ENCODE measurements at regions of chr17 and their contacts with region 1.

Region 1: GRCh38 chr17:34443619-34444469 is 80.8 kb upstream of the CCL1 start:
- DNase-seq: peak; percentile 48 to 55
- H3K4me3 ChIP-seq: no peak overlapping the region
- H3K4me3 Mint-ChIP-seq: no peak overlapping the region
- H3K27ac Mint-ChIP-seq: no peak overlapping the region
- H3K4me1 ChIP-seq: no peaks in the 10 kb centered on the region
- H3K4me1 Mint-ChIP-seq: no peaks in the 10 kb centered on the region
- H3K27me3 ChIP-seq: no peaks in the 10 kb centered on the region; the same call in 1 of the 2 replicates
- H3K27me3 Mint-ChIP-seq: peaks cover 24% of the 10 kb centered on the region
- CTCF ChIP-seq: peak in 1 of 2 experiments; percentile 58

Region 2: DNA sequence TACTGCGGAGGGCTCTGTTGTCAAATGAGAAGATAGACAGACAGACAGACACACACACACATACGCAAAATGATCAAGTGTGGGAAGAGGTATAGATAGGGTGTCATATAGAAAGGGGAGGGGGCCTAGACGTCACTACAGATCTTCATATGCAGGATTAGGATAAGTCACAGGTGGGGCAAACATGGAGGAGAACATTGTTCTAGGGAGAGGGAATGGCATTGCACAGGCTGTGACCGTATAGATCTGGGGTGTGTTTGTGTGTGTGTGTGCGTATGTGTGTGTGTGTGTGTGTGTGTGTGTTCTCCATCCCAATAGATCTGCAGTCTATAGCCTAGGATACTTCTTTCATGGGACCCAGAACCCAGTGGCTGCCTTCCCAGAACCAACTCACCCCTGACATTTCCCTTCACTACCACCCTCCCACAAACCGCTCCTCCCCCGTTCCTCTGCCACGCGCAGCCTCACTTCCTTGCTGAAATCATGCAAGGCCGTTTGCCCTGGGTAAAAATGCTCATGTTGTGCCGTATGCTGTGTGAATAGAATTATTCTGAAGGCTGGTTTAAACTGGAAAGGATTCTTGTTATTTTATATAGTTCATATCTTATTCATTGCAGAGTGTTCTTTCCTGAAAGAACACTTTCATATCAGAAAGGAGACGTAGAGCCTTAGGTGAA is 30.3 kb before region 1 on chr17:
- CTCF ChIA-PET with region 1: no interaction called
- POLR2A ChIA-PET with region 1: no interaction called
- intact Hi-C with region 1: no loop called
- DNase-seq: no peak
- H3K4me3 ChIP-seq: no peak overlapping the region
- H3K4me3 Mint-ChIP-seq: no peak overlapping the region
- H3K27ac Mint-ChIP-seq: no peak overlapping the region
- H3K4me1 ChIP-seq: no peaks in the 10 kb centered on the region
- H3K4me1 Mint-ChIP-seq: peaks cover 7% of the 10 kb centered on the region
- H3K27me3 ChIP-seq: no peaks in the 10 kb centered on the region
- H3K27me3 Mint-ChIP-seq: peaks cover 21% of the 10 kb centered on the region
- CTCF ChIP-seq: no peak

Region 3: DNA sequence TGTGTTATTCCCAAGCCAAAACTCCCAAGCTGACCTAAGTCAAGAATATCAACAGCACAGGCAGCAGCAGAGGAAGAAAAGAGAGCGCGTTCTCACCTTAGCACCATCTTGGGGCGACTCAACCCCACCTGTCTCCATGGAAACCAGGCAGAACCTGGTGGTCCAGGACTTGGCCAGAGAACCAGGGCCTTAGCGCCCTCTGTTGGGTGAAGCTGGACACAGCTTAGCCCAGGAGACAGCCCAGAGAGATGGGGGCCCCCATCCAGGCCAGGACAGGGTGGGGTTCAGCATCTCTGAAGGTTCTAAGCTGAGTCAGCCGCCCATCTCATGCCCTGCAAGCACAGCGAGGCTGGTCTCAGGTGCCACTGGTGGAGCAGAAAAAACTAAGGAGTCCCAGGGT is 75.4 kb after region 1 on chr17:
- CTCF ChIA-PET with region 1: no interaction called
- POLR2A ChIA-PET with region 1: no interaction called
- intact Hi-C with region 1: loop called (anchors 1 kb)
- DNase-seq: peak in 1 of 2 experiments; percentile 25
- H3K4me3 ChIP-seq: no peak overlapping the region
- H3K4me3 Mint-ChIP-seq: no peak overlapping the region
- H3K27ac Mint-ChIP-seq: no peak overlapping the region
- H3K4me1 ChIP-seq: no peaks in the 10 kb centered on the region
- H3K4me1 Mint-ChIP-seq: no peaks in the 10 kb centered on the region
- H3K27me3 ChIP-seq: peaks cover 2% of the 10 kb centered on the region
- H3K27me3 Mint-ChIP-seq: peaks cover 10% of the 10 kb centered on the region
- CTCF ChIP-seq: peak; percentile 41 to 58

Region 4: GRCh38 chr17:34637548-34638525 is 194.0 kb after region 1 on chr17:
- CTCF ChIA-PET with region 1: no interaction called
- POLR2A ChIA-PET with region 1: no interaction called
- intact Hi-C with region 1: loop called (anchors 2 kb)
- DNase-seq: peak; percentile 70 to 84
- H3K4me3 ChIP-seq: no peak overlapping the region
- H3K4me3 Mint-ChIP-seq: no peak overlapping the region
- H3K27ac Mint-ChIP-seq: no peak overlapping the region
- H3K4me1 ChIP-seq: peaks cover 7% of the 10 kb centered on the region; the same call in 1 of the 2 replicates
- H3K4me1 Mint-ChIP-seq: peaks cover 13% of the 10 kb centered on the region
- H3K27me3 ChIP-seq: no peaks in the 10 kb centered on the region; the same call in 1 of the 2 replicates
- H3K27me3 Mint-ChIP-seq: peaks cover 24% of the 10 kb centered on the region
- CTCF ChIP-seq: peak; percentile 84 to 94

Region 5: GRCh38 chr17:35002876-35003518 is 559.2 kb after region 1 on chr17:
- CTCF ChIA-PET with region 1: no interaction called
- POLR2A ChIA-PET with region 1: no interaction called
- intact Hi-C with region 1: no loop called
- DNase-seq: no peak
- H3K4me3 ChIP-seq: no peak overlapping the region
- H3K4me3 Mint-ChIP-seq: no peak overlapping the region
- H3K27ac Mint-ChIP-seq: no peak overlapping the region
- H3K4me1 ChIP-seq: no peaks in the 10 kb centered on the region
- H3K4me1 Mint-ChIP-seq: peaks cover 7% of the 10 kb centered on the region
- H3K27me3 ChIP-seq: no peaks in the 10 kb centered on the region
- H3K27me3 Mint-ChIP-seq: no peaks in the 10 kb centered on the region
- CTCF ChIP-seq: no peak